ENCODE measurements at regions of chr17 and their contacts with region 1.

Region 1: GRCh38 chr17:63741221-63742049 is at the start of gene STRADA:
- DNase-seq: peak; percentile 100
- ATAC-seq: peak; percentile 94
- H3K4me3 Mint-ChIP-seq: peak within 1 kb of the TSS; percentile 91
- H3K27ac Mint-ChIP-seq: peak within 1 kb of the TSS; percentile 95
- H3K4me1 Mint-ChIP-seq: peaks cover 29% of the 10 kb centered on the region
- H3K27me3 Mint-ChIP-seq: no peaks in the 10 kb centered on the region
- total RNA-seq, gene STRADA: 51.0 to 53.6 TPM

Region 2: DNA sequence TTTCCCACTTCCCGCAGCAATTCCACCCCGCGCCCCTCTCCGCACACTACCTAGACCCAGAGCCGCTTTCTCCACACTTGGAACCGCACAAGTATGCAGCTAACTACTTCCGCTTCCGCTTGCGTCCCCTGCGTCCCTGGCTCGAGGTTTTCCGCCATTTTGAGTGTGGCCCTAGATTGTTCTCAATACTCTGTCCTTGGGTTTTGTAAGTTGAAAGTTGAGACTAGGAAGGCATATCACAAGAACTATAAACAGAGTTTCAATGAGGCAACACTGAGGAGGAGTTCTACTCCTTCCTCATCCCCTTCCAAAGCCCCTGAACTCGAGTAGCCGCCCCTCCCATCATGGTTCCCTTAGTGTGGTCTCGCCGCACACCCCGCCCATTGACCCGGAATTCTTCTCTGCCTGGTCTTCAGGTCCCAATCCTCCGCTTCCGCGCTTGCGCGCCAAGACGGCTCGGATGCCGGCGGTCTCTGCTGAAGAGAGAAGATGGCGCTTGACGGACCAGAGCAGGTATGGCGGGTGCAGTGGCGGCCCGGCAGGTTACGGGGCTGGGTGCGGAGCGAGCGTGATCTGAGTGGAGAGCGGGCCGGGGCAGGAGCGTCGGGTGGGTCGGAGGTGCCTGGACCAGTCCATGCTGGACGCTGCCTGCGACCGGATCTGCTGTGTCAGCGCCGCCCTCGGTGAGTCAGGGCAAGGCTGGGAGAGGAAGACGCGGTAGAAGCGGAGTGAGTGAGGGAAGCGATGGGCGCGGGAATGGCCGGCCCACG is 85.8 kb after region 1 on chr17 and contains the starts of genes FTSJ3 and PSMC5:
- CTCF ChIA-PET with region 1: interaction called, 3 read pairs
- POLR2A ChIA-PET with region 1: interaction called, 5 read pairs
- intact Hi-C with region 1: loop called (anchors 1 kb)
- DNase-seq: peak; percentile 97
- ATAC-seq: peak; percentile 94
- H3K4me3 Mint-ChIP-seq: peak within 1 kb of the TSS; percentile 88
- H3K27ac Mint-ChIP-seq: peak within 1 kb of the TSS; percentile 99
- H3K4me1 Mint-ChIP-seq: peaks cover 72% of the 10 kb centered on the region
- H3K27me3 Mint-ChIP-seq: no peaks in the 10 kb centered on the region
- total RNA-seq, gene FTSJ3: 52.1 to 61.2 TPM
- total RNA-seq, gene PSMC5: 98.2 to 160 TPM

Measured in activated CD4-positive, alpha-beta T cell treated with anti-CD3 and anti-CD28 coated beads for 36 hours (primary cell).